H1 (cell line): ENCODE measurements at regions of chr3 and their contacts with region 1.

Region 1: DNA sequence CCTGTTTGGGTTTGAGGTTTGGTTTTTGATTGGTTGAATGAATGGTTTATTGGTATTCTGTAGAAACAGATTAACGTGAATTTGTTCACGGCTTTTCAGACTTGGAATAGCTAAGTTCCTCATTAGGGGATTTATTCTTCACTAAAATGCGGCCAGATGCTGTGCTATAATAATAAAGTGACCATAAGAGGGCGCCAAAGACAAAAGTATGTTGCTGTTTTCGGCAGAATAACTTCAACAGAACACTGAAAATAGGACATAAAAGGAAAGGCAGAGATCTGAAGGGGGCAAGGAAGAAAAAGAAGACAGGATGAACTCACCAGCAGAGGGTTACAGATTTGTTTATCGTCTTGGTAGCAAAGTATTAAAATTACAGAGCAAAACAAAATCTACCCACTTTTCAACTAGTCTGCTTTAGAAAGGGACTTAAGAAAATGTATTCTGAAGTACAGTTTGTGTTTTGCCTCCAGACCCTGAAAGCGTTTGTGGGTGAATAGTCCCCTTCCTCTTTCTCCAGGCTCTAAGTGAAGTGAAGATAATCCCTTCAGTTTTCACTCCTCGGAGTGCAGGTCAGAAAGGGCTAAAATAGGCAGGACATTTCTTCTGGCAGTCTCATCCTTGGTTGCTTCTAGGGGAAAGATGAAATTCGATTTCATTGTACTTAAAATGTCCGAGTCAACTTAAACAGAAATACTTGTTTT is 147.6 kb downstream of the IL20RB start:
- DNase-seq: no peak
- H3K4me3 ChIP-seq: peak overlapping the region; percentile 6 to 55 (median 29); a peak in 5 of 8 replicates
- H3K27ac ChIP-seq: no peak overlapping the region; the same call in 1 of the 2 replicates
- H3K4me1 ChIP-seq: peaks cover 3 to 15% (median 9%) of the 10 kb centered on the region in 4 experiments
- H3K27me3 ChIP-seq: no peaks in the 10 kb centered on the region
- CTCF ChIP-seq: peak in 2 of 3 experiments; percentile 59 to 72; a peak in 2 of 4 replicates
- EP300 ChIP-seq: no peak
- POLR2A ChIP-seq: no peak
- RAD21 ChIP-seq: peak; percentile 77 to 83

Region 2: GRCh38 chr3:136949708-136950107 is 155.7 kb before region 1 on chr3:
- CTCF ChIA-PET with region 1: no interaction called
- POLR2A ChIA-PET with region 1: no interaction called
- DNase-seq: no peak
- H3K4me3 ChIP-seq: no peak overlapping the region
- H3K27ac ChIP-seq: no peak overlapping the region
- H3K4me1 ChIP-seq: no peaks in the 10 kb centered on the region
- H3K27me3 ChIP-seq: no peaks in the 10 kb centered on the region
- CTCF ChIP-seq: no peak
- EP300 ChIP-seq: no peak
- POLR2A ChIP-seq: no peak
- RAD21 ChIP-seq: no peak

Region 3: DNA sequence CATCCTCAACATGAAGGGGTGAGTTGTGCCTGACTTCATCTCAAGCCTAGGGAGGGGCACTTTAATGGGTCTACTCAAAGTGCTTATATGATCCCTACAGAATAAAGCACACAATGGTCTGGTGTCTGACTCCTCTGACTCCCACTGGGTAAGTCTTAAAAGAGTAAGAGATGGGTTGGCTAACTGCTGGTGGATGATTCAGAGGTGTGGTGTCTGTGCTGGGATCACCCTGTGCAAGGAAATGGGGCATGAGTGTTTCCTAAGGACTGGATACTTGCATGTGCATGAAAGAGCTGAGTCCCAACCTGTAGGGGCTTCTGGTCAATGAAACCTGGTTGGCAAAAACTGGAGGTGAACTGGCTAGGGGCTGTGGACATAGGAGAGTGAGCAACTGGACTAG is 11.2 kb after region 1 on chr3:
- CTCF ChIA-PET with region 1: interaction called, 66 read pairs
- POLR2A ChIA-PET with region 1: no interaction called
- DNase-seq: no peak
- H3K4me3 ChIP-seq: no peak overlapping the region
- H3K27ac ChIP-seq: no peak overlapping the region
- H3K4me1 ChIP-seq: no peaks in the 10 kb centered on the region
- H3K27me3 ChIP-seq: peaks cover 0 to 3% (median 0%) of the 10 kb centered on the region in 4 experiments; a peak in 1 of 7 replicates
- CTCF ChIP-seq: no peak
- EP300 ChIP-seq: no peak
- POLR2A ChIP-seq: no peak
- RAD21 ChIP-seq: no peak

Region 4: GRCh38 chr3:137121704-137122314 is 16.4 kb after region 1 on chr3:
- CTCF ChIA-PET with region 1: interaction called, 66 read pairs
- POLR2A ChIA-PET with region 1: no interaction called
- DNase-seq: no peak
- H3K4me3 ChIP-seq: no peak overlapping the region
- H3K27ac ChIP-seq: no peak overlapping the region
- H3K4me1 ChIP-seq: no peaks in the 10 kb centered on the region
- H3K27me3 ChIP-seq: no peaks in the 10 kb centered on the region
- CTCF ChIP-seq: peak; percentile 72 to 91 (median 83)
- EP300 ChIP-seq: no peak
- POLR2A ChIP-seq: no peak
- RAD21 ChIP-seq: peak; percentile 77 to 85

Region 5: GRCh38 chr3:137163241-137163871 is 57.9 kb after region 1 on chr3:
- CTCF ChIA-PET with region 1: interaction called, 33 read pairs
- POLR2A ChIA-PET with region 1: no interaction called
- DNase-seq: no peak
- H3K4me3 ChIP-seq: no peak overlapping the region
- H3K27ac ChIP-seq: no peak overlapping the region
- H3K4me1 ChIP-seq: peaks cover 0 to 12% (median 7%) of the 10 kb centered on the region in 4 experiments; a peak in 3 of 7 replicates
- H3K27me3 ChIP-seq: no peaks in the 10 kb centered on the region
- CTCF ChIP-seq: no peak
- EP300 ChIP-seq: no peak
- POLR2A ChIP-seq: no peak
- RAD21 ChIP-seq: no peak

Region 6: DNA sequence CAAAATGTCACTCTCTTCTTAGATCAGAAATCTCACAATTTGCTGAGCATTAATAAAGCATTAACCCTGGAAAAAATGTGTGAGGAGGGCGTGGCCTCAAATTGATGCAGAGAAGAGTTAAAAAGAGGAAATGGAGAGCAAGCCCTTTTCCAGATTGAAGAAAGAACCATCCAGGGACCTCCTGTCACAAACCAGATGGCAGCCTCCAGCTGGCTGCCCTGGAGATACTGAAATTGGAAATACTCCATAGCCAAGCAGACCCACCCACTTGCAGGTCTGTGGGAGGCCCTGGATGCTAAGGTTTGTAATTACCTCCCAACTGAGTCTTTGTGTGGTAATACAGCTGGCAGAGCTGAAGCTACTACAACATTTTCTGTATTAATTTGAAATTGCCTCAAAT is 67.3 kb after region 1 on chr3:
- CTCF ChIA-PET with region 1: interaction called, 10 read pairs
- POLR2A ChIA-PET with region 1: no interaction called
- DNase-seq: no peak
- H3K4me3 ChIP-seq: no peak overlapping the region
- H3K27ac ChIP-seq: no peak overlapping the region
- H3K4me1 ChIP-seq: no peaks in the 10 kb centered on the region
- H3K27me3 ChIP-seq: no peaks in the 10 kb centered on the region
- CTCF ChIP-seq: no peak
- EP300 ChIP-seq: no peak
- POLR2A ChIP-seq: no peak
- RAD21 ChIP-seq: no peak

Region 7: DNA sequence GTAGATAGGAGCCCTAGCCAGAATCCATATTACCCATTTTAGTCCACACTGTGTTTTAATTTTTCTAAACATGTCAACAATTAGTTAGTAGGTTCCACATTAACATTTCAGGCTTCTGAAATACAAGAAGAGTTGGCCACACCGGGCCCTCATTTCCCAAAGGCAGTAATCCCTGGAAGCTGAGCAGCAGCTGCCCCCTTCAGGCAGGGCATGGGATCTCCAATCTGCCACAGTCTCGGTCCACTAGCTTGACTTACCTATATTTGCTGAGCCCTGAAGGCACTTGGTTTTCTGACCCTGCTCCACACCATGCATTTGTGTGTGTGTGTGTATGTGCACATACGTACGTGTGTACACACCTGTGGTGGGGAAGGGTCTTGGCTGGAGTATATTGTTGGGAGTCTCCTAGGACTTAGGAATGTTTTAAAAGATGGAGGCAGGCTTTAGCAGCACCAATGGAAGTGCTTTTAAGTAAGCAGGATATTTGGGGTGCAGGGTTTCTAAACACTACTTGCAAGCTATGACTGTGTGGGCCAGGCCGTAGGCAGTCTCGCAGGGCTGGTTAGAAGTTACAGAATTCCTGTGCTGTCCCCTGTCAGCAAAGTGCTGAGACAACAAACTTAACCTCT is 587.5 kb after region 1 on chr3:
- CTCF ChIA-PET with region 1: interaction called, 28 read pairs
- POLR2A ChIA-PET with region 1: no interaction called
- DNase-seq: peak; percentile 57 to 75
- H3K4me3 ChIP-seq: no peak overlapping the region
- H3K27ac ChIP-seq: no peak overlapping the region
- H3K4me1 ChIP-seq: peaks cover 0 to 10% (median 6%) of the 10 kb centered on the region in 4 experiments; a peak in 4 of 7 replicates
- H3K27me3 ChIP-seq: no peaks in the 10 kb centered on the region
- CTCF ChIP-seq: peak; percentile 95 to 98 (median 96)
- EP300 ChIP-seq: no peak
- POLR2A ChIP-seq: no peak
- RAD21 ChIP-seq: peak; percentile 98 to 100